CD8-positive, alpha-beta T cell (primary cell): ENCODE measurements at regions of chr12 and their contacts with region 1.

Region 1: DNA sequence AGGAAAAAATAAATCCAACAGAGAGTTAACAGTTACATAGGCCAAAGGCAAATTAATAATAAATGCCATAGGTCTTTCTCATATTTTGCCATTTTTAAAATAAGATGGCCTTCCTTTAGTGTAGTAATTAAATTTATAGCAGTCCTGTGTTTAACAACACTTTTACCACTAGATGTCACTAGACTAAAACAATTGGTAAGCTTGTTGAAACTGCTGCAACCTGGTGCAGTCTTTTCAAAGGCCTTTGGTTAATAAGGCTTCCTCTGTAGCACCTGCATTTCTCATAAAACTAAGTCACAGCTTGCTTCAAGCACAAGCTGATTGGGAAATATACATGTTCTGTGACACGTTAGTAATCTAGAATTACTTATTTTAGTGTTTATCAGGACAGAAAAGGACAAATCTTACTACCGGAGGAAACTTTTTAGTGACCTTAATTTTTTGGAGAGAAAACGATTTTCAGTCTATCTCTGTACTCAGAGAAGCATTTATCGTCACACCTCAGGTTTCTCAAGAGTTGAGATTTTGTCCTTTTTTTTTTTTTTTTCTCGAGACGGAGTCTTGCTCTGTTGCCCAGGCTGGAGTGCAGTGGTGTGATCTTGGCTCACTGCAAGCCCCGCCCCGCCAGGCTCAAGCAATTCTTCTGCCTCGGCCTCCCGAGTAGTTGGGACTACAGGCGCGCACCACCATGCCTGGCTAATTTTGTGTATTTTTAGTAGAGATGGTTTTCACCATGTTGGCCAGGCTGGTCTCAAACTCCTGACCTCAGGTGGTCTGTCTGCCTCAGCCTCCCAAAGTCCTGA is 20.0 kb downstream of the BORCS5 start:
- DNase-seq: peak in 3 of 9 experiments; percentile 37 to 87 (median 76)
- ATAC-seq: peak; percentile 39
- H3K4me3 ChIP-seq: no peak overlapping the region
- H3K4me3 Mint-ChIP-seq: no peak overlapping the region
- H3K27ac ChIP-seq: no peak overlapping the region
- H3K27ac Mint-ChIP-seq: peak overlapping the region; percentile 60
- H3K4me1 ChIP-seq: peaks cover 21% of the 10 kb centered on the region
- H3K4me1 Mint-ChIP-seq: peaks cover 37% of the 10 kb centered on the region
- H3K27me3 ChIP-seq: no peaks in the 10 kb centered on the region
- H3K27me3 Mint-ChIP-seq: no peaks in the 10 kb centered on the region
- CTCF ChIP-seq: peak; percentile 79

Region 2: GRCh38 chr12:12482959-12483358 is 106.1 kb after region 1 on chr12:
- CTCF ChIA-PET with region 1: interaction called, 10 read pairs
- POLR2A ChIA-PET with region 1: interaction called, 11 read pairs
- intact Hi-C with region 1: loop called (anchors 2 kb)
- DNase-seq: no peak
- ATAC-seq: no peak
- H3K4me3 ChIP-seq: peak overlapping the region in 1 of 2 experiments; percentile 11
- H3K4me3 Mint-ChIP-seq: peak overlapping the region; percentile 47
- H3K27ac ChIP-seq: peak overlapping the region; percentile 73 to 83
- H3K27ac Mint-ChIP-seq: peak overlapping the region; percentile 99
- H3K4me1 ChIP-seq: peaks cover 28% of the 10 kb centered on the region
- H3K4me1 Mint-ChIP-seq: peaks cover 52% of the 10 kb centered on the region
- H3K27me3 ChIP-seq: no peaks in the 10 kb centered on the region
- H3K27me3 Mint-ChIP-seq: no peaks in the 10 kb centered on the region
- CTCF ChIP-seq: no peak

Region 3: GRCh38 chr12:12611512-12612306 is 234.9 kb after region 1 on chr12 and contains the start of gene CREBL2:
- CTCF ChIA-PET with region 1: interaction called, 8 read pairs
- POLR2A ChIA-PET with region 1: interaction called, 3 read pairs
- intact Hi-C with region 1: loop called in 1 of 2 experiments (anchors 2 kb)
- DNase-seq: peak; percentile 72 to 95 (median 85)
- ATAC-seq: peak; percentile 90
- H3K4me3 ChIP-seq: peak within 1 kb of the TSS; percentile 72 to 90
- H3K4me3 Mint-ChIP-seq: peak within 1 kb of the TSS; percentile 88
- H3K27ac ChIP-seq: peak within 1 kb of the TSS; percentile 82 to 89
- H3K27ac Mint-ChIP-seq: peak within 1 kb of the TSS; percentile 95
- H3K4me1 ChIP-seq: peaks cover 52% of the 10 kb centered on the region
- H3K4me1 Mint-ChIP-seq: peaks cover 53% of the 10 kb centered on the region
- H3K27me3 ChIP-seq: no peaks in the 10 kb centered on the region
- H3K27me3 Mint-ChIP-seq: no peaks in the 10 kb centered on the region
- CTCF ChIP-seq: no peak
- total RNA-seq, gene CREBL2: 10.2 to 11.8 TPM

Region 4: GRCh38 chr12:12661086-12661485 is 284.2 kb after region 1 on chr12:
- CTCF ChIA-PET with region 1: interaction called, 80 read pairs
- POLR2A ChIA-PET with region 1: no interaction called
- intact Hi-C with region 1: loop called (anchors 1 kb)
- DNase-seq: no peak
- ATAC-seq: no peak
- H3K4me3 ChIP-seq: no peak overlapping the region
- H3K4me3 Mint-ChIP-seq: no peak overlapping the region
- H3K27ac ChIP-seq: no peak overlapping the region
- H3K27ac Mint-ChIP-seq: no peak overlapping the region
- H3K4me1 ChIP-seq: no peaks in the 10 kb centered on the region
- H3K4me1 Mint-ChIP-seq: peaks cover under 1% of the 10 kb centered on the region
- H3K27me3 ChIP-seq: no peaks in the 10 kb centered on the region
- H3K27me3 Mint-ChIP-seq: no peaks in the 10 kb centered on the region
- CTCF ChIP-seq: no peak

Region 5: DNA sequence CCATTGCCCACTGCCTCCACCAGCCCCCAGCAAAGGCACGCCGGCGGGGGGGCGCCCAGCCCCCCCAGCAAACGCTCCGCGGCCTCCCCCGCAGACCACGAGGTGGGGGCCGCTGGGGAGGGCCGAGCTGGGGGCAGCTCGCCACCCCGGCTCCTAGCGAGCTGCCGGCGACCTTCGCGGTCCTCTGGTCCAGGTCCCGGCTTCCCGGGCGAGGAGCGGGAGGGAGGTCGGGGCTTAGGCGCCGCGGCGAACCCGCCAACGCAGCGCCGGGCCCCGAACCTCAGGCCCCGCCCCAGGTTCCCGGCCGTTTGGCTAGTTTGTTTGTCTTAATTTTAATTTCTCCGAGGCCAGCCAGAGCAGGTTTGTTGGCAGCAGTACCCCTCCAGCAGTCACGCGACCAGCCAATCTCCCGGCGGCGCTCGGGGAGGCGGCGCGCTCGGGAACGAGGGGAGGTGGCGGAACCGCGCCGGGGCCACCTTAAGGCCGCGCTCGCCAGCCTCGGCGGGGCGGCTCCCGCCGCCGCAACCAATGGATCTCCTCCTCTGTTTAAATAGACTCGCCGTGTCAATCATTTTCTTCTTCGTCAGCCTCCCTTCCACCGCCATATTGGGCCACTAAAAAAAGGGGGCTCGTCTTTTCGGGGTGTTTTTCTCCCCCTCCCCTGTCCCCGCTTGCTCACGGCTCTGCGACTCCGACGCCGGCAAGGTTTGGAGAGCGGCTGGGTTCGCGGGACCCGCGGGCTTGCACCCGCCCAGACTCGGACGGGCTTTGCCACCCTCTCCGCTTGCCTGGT is 340.1 kb after region 1 on chr12 and contains the start of gene CDKN1B:
- CTCF ChIA-PET with region 1: interaction called, 8 read pairs
- POLR2A ChIA-PET with region 1: interaction called, 3 read pairs
- intact Hi-C with region 1: loop called (anchors 5 kb)
- DNase-seq: peak; percentile 76 to 93 (median 86)
- ATAC-seq: peak; percentile 62
- H3K4me3 ChIP-seq: peak within 1 kb of the TSS; percentile 95 to 96
- H3K4me3 Mint-ChIP-seq: peak within 1 kb of the TSS; percentile 98
- H3K27ac ChIP-seq: peak within 1 kb of the TSS; percentile 93 to 97
- H3K27ac Mint-ChIP-seq: peak within 1 kb of the TSS; percentile 98
- H3K4me1 ChIP-seq: peaks cover 47% of the 10 kb centered on the region
- H3K4me1 Mint-ChIP-seq: peaks cover 66% of the 10 kb centered on the region
- H3K27me3 ChIP-seq: no peaks in the 10 kb centered on the region
- H3K27me3 Mint-ChIP-seq: no peaks in the 10 kb centered on the region
- CTCF ChIP-seq: no peak
- total RNA-seq, gene CDKN1B: 240 to 245 TPM

Region 6: DNA sequence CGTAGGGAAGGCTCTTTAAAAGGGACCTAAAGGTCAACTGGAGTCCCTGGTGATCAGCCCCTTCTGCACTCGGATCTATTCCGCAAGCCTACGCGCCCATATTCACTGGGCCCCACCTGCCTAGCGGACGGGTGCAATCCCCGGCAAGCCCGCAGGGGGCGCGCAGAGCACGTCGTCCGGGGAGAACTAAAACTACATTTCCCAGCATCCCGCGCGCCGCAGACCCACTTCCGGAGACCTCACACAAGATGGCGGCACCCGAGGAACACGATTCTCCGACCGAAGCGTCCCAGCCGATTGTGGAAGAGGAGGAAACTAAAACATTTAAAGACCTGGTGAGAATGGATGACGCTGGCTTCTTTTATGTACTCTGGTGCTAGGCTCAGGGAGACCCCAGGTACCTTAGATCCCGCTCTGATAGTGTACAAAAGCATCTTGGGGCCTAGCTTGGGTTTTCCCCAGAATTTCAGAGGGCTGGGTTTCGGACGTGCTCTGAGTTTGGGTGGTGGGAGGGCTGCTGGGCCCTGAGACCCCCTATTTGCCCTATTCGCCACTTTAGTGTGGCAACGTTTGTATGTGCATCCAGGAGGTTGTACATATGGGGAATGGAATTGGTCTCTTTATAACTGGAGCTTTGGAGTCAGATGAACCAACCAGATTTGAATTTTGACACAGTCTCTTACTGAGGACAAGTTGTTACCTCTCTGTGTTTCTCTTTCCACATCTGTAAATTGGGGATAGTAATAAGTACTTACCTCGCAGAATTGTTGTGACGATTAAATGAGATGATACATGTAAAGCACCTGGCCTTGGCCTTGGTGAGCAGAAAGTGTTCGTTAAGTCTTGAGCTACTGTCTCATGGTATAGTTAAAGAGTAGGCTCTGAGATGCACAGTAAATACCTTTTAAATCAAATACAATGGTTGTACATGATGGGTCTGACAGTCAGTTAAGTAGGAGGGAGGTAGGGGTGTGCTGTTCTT is 436.6 kb after region 1 on chr12 and contains the start of gene DDX47:
- CTCF ChIA-PET with region 1: interaction called, 3 read pairs
- POLR2A ChIA-PET with region 1: no interaction called
- intact Hi-C with region 1: loop called in 1 of 2 experiments (anchors 2 kb)
- DNase-seq: peak; percentile 94 to 99 (median 96)
- ATAC-seq: peak; percentile 88
- H3K4me3 ChIP-seq: peak within 1 kb of the TSS; percentile 88 to 98
- H3K4me3 Mint-ChIP-seq: peak within 1 kb of the TSS; percentile 95
- H3K27ac ChIP-seq: peak within 1 kb of the TSS; percentile 78 to 91
- H3K27ac Mint-ChIP-seq: peak within 1 kb of the TSS; percentile 96
- H3K4me1 ChIP-seq: peaks cover 34% of the 10 kb centered on the region
- H3K4me1 Mint-ChIP-seq: peaks cover 65% of the 10 kb centered on the region
- H3K27me3 ChIP-seq: no peaks in the 10 kb centered on the region
- H3K27me3 Mint-ChIP-seq: no peaks in the 10 kb centered on the region
- CTCF ChIP-seq: peak; percentile 93
- total RNA-seq, gene DDX47: 173 to 174 TPM